ENCODE measurements at regions of chr6 and their contacts with region 1.

Region 1: GRCh38 chr6:106608062-106608668 is 21.1 kb downstream of the RTN4IP1 start:
- DNase-seq: no peak
- ATAC-seq: peak; percentile 88
- H3K4me3 Mint-ChIP-seq: no peak overlapping the region
- H3K27ac Mint-ChIP-seq: no peak overlapping the region
- H3K4me1 Mint-ChIP-seq: peaks cover 50% of the 10 kb centered on the region
- H3K27me3 Mint-ChIP-seq: no peaks in the 10 kb centered on the region
- CTCF ChIP-seq: peak; percentile 72

Region 2: DNA sequence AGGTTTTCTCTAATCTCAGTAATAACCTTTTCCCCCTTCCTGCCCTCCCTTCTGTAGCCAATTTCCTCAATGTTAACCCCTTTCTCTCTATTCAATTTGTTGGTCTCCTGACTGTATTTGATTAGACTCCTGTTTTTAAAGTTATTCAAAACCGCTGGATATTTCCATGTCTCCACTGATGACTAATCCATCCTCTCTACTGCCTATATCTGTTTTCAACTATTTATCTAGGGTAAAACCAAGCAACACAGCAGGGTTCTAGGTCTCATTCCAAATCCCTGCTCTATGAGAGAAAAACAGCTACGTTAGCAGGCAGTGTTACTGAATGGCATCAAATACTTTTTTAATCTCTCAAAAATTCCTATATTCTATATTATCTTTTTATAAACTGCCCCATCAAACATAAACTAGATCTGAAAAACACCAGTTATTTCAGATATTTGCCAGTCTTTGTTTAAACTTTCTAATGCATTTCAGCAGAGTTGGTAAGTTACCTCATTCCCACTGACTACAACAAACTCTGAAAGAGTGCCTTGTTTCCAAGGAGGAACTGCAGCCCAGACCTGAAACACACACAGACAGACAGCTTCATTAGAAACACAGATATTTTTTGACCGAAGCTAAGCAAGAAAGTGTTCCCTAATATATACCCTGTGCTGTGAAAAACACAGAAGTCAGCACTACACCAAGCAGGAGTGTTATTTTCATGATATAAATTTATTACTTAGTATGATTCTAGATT is 12.9 kb after region 1 on chr6:
- CTCF ChIA-PET with region 1: interaction called, 13 read pairs
- POLR2A ChIA-PET with region 1: interaction called, 4 read pairs
- intact Hi-C with region 1: no loop called
- DNase-seq: no peak
- ATAC-seq: no peak
- H3K4me3 Mint-ChIP-seq: no peak overlapping the region
- H3K27ac Mint-ChIP-seq: no peak overlapping the region
- H3K4me1 Mint-ChIP-seq: peaks cover 21% of the 10 kb centered on the region
- H3K27me3 Mint-ChIP-seq: no peaks in the 10 kb centered on the region
- CTCF ChIP-seq: no peak

Region 3: DNA sequence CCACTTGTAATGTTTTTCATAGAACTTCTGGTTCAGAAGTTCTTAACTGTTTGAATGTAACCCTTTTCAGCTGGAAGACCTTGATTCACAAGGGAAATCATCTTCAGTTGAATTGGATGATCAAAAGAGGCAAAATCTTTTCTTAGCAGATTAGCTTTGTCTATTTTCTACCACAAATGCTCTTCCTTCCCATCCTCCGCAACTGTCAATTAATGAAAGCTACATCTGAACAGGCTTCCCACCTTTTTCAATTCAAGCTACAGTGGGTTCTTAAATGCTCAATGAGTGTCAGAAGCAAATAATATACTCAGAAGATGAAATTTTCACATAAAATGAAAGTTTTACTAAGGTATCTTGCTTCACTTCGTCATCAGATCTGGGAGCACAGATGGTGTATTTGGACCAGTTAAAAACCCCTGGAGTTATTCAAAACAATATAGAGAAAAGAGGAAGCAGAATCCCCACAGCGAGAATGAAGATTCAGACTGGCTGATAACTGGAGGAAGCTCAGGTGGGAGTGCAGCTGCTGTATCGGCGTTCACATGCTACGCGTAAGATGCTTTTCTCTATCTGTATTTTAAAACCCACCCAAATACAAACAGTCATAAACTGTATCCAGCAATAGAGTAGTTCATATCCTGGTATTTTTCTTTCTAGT is 40.6 kb after region 1 on chr6:
- CTCF ChIA-PET with region 1: interaction called, 5 read pairs
- POLR2A ChIA-PET with region 1: no interaction called
- intact Hi-C with region 1: loop called (anchors 5 kb)
- DNase-seq: no peak
- ATAC-seq: peak; percentile 96
- H3K4me3 Mint-ChIP-seq: peak overlapping the region; percentile 84
- H3K27ac Mint-ChIP-seq: peak overlapping the region; percentile 96
- H3K4me1 Mint-ChIP-seq: peaks cover 48% of the 10 kb centered on the region
- H3K27me3 Mint-ChIP-seq: no peaks in the 10 kb centered on the region
- CTCF ChIP-seq: no peak

Region 4: DNA sequence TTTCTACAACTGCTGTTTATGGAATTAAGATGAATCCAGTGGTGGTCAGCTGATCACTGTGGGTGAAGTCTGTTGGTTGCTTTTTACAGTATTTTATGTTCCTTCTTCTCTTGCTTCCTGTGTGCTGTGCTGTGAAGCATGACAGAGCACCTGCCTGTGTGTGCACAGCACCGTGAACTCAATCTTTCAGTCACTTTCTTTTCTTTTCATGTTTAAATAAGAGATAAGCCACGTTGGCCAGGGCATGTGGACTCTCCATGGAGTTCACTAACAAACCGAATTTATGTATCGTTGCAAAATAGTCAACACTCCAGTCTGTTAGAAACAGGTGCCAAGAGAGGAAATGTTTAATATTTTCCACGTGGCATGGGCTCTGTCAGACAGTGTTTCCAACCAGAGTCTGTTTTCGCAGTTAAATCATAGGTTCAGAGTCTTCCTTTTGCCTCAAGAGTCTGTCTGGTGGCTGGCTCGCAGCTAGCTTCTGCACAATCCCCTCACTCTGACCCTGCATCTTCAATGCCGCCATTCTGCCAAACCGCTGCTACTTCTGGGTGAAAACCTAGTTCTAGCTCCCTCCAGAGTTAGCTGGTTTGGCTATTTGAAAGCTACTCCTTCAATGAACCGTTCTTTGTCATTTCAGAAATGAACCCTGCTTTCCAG is 94.4 kb after region 1 on chr6:
- CTCF ChIA-PET with region 1: no interaction called
- POLR2A ChIA-PET with region 1: no interaction called
- intact Hi-C with region 1: loop called (anchors 5 kb)
- DNase-seq: peak; percentile 30
- ATAC-seq: peak; percentile 92
- H3K4me3 Mint-ChIP-seq: peak overlapping the region; percentile 81
- H3K27ac Mint-ChIP-seq: peak overlapping the region; percentile 98
- H3K4me1 Mint-ChIP-seq: peaks cover 91% of the 10 kb centered on the region
- H3K27me3 Mint-ChIP-seq: no peaks in the 10 kb centered on the region
- CTCF ChIP-seq: no peak

Region 5: GRCh38 chr6:106973836-106974330 is 365.7 kb after region 1 on chr6:
- CTCF ChIA-PET with region 1: interaction called, 95 read pairs
- POLR2A ChIA-PET with region 1: interaction called, 6 read pairs
- intact Hi-C with region 1: loop called (anchors 1 kb)
- DNase-seq: no peak
- ATAC-seq: peak; percentile 10
- H3K4me3 Mint-ChIP-seq: peak overlapping the region; percentile 93
- H3K27ac Mint-ChIP-seq: peak overlapping the region; percentile 85
- H3K4me1 Mint-ChIP-seq: peaks cover 39% of the 10 kb centered on the region
- H3K27me3 Mint-ChIP-seq: no peaks in the 10 kb centered on the region
- CTCF ChIP-seq: no peak